CD4-positive, alpha-beta memory T cell (primary cell): ENCODE measurements at regions of chr17 and their contacts with region 1.

Region 1: GRCh38 chr17:80791758-80792284 is 199.8 kb upstream of the CHMP6 start:
- DNase-seq: peak in 4 of 5 donors; percentile 22 to 75 (median 30)
- H3K4me3 ChIP-seq: peak overlapping the region in 1 of 2 donors; percentile 13
- H3K4me3 Mint-ChIP-seq: peak overlapping the region; percentile 64 to 92 (median 86)
- H3K27ac ChIP-seq: peak overlapping the region; percentile 50
- H3K27ac Mint-ChIP-seq: peak overlapping the region; percentile 87 to 96 (median 95)
- H3K4me1 ChIP-seq: peaks cover 69% of the 10 kb centered on the region
- H3K4me1 Mint-ChIP-seq: peaks cover 61 to 81% (median 65%) of the 10 kb centered on the region in 4 donors
- H3K27me3 ChIP-seq: no peaks in the 10 kb centered on the region
- H3K27me3 Mint-ChIP-seq: no peaks in the 10 kb centered on the region

Region 2: GRCh38 chr17:80575057-80575875 is 216.6 kb before region 1 on chr17:
- CTCF ChIA-PET with region 1: interaction called, 6 read pairs
- POLR2A ChIA-PET with region 1: no interaction called
- intact Hi-C with region 1: loop called (anchors 10 kb)
- DNase-seq: peak; percentile 83 to 87 (median 83)
- H3K4me3 ChIP-seq: no peak overlapping the region
- H3K4me3 Mint-ChIP-seq: no peak overlapping the region
- H3K27ac ChIP-seq: no peak overlapping the region
- H3K27ac Mint-ChIP-seq: peak overlapping the region in 2 of 7 donors; percentile 35 to 61
- H3K4me1 ChIP-seq: peaks cover 10% of the 10 kb centered on the region
- H3K4me1 Mint-ChIP-seq: peaks cover 8 to 23% (median 13%) of the 10 kb centered on the region in 4 donors
- H3K27me3 ChIP-seq: no peaks in the 10 kb centered on the region
- H3K27me3 Mint-ChIP-seq: no peaks in the 10 kb centered on the region

Region 3: DNA sequence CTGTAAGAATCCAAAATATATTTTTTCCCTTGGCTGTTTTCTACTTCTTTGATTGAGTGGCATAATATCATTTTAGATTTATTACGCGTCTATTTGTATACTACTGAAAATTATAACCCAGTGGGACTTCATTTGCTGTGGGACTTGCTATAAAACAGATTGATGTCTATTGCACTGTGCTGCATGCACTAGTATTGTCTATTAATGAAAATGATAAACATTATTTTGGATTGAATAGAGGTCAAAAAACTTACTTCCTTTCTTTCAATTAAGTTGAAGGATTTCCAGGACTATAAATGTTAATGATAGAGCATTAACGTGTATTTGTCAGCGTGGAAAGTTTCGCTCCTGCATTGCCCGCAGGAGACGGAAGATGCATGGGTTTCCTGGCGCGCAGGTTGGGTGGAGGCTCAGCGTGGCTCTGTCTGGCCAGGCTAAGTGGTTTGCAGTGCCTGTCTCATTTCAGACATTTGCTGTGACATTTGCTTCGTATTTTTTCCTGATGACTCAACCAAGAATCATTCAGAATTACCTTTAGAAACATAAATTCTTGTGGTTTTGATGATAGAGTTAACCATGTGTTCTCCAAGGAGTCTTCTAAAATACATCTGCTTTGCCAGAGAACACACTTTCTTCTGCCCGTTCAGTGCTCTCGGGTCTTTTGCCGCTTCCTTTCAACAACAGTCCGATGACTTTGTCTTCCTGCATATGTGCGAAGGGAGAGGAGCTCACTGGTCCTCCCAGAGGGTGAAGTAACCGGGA is 30.5 kb before region 1 on chr17:
- CTCF ChIA-PET with region 1: interaction called, 7 read pairs
- POLR2A ChIA-PET with region 1: interaction called, 32 read pairs
- intact Hi-C with region 1: no loop called
- DNase-seq: peak; percentile 45 to 87 (median 53)
- H3K4me3 ChIP-seq: peak overlapping the region in 1 of 2 donors; percentile 27
- H3K4me3 Mint-ChIP-seq: peak overlapping the region; percentile 73 to 87 (median 80)
- H3K27ac ChIP-seq: peak overlapping the region; percentile 49
- H3K27ac Mint-ChIP-seq: peak overlapping the region; percentile 89 to 96 (median 94)
- H3K4me1 ChIP-seq: peaks cover 72% of the 10 kb centered on the region
- H3K4me1 Mint-ChIP-seq: peaks cover 59 to 86% (median 73%) of the 10 kb centered on the region in 4 donors
- H3K27me3 ChIP-seq: no peaks in the 10 kb centered on the region
- H3K27me3 Mint-ChIP-seq: no peaks in the 10 kb centered on the region

Region 4: DNA sequence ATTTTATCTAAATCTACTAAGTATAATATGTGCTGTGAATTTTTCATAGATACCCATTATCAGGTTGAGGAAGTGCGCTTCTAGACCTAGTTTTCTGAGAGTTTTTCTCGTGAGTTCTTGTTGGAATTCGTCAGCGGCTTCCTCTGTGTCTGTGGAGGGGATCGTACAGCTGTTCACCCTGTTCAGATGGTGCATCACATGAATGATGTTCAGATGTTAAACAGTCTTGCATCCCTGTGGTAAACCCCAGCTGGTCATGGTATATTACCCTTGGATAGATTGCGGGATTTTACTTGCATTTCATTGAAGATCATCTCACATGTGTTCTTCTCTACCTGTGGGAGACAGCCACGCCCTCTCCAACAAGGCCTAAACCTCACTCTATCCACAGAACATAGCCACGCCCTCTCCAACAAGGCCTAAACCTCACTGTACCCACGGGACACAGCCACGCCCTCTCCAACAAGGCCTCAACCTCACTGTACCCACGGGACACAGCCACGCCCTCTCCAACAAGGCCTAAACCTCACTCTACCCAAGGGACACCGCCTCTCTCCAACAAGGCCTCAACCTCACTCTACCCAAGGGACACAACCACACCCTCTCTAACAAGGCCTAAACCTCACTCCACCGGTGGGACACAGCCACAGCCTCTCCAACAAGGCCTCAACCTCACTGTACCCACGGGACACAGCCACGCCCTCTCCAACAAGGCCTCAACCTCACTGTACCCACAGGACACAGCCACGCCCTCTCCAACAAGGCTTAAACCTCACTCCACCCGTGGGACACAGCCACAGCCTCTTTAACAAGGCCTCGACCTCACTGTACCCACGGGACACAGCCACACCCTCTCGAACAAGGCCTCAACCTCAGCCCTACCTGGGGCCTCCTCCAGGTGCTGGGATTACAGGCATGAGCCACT is 19.6 kb after region 1 on chr17:
- CTCF ChIA-PET with region 1: interaction called, 11 read pairs
- POLR2A ChIA-PET with region 1: interaction called, 19 read pairs
- intact Hi-C with region 1: no loop called
- DNase-seq: peak in 4 of 5 donors; percentile 15 to 58 (median 36)
- H3K4me3 ChIP-seq: no peak overlapping the region
- H3K4me3 Mint-ChIP-seq: peak overlapping the region in 6 of 8 donors; percentile 23 to 82 (median 76)
- H3K27ac ChIP-seq: peak overlapping the region; percentile 52
- H3K27ac Mint-ChIP-seq: peak overlapping the region; percentile 86 to 97 (median 95)
- H3K4me1 ChIP-seq: peaks cover 22% of the 10 kb centered on the region
- H3K4me1 Mint-ChIP-seq: peaks cover 22 to 54% (median 38%) of the 10 kb centered on the region in 4 donors
- H3K27me3 ChIP-seq: no peaks in the 10 kb centered on the region
- H3K27me3 Mint-ChIP-seq: no peaks in the 10 kb centered on the region

Region 5: GRCh38 chr17:80855948-80856862 is 64.4 kb after region 1 on chr17:
- CTCF ChIA-PET with region 1: no interaction called
- POLR2A ChIA-PET with region 1: interaction called, 5 read pairs
- intact Hi-C with region 1: loop called (anchors 2 kb)
- DNase-seq: peak; percentile 34 to 86 (median 59)
- H3K4me3 ChIP-seq: no peak overlapping the region
- H3K4me3 Mint-ChIP-seq: peak overlapping the region in 7 of 8 donors; percentile 3 to 52 (median 40)
- H3K27ac ChIP-seq: peak overlapping the region; percentile 42
- H3K27ac Mint-ChIP-seq: peak overlapping the region; percentile 71 to 90 (median 79)
- H3K4me1 ChIP-seq: peaks cover 27% of the 10 kb centered on the region
- H3K4me1 Mint-ChIP-seq: peaks cover 20 to 53% (median 39%) of the 10 kb centered on the region in 4 donors
- H3K27me3 ChIP-seq: no peaks in the 10 kb centered on the region
- H3K27me3 Mint-ChIP-seq: no peaks in the 10 kb centered on the region